Common myeloid progenitor, CD34-positive (primary cell): ENCODE measurements at regions of chr10 and their contacts with region 1.

Region 1: GRCh38 chr10:124741281-124741921 is 2.8 kb downstream of the FAM53B start:
- DNase-seq: peak; percentile 61 to 72 (median 71)
- H3K4me3 ChIP-seq: peak overlapping the region in 4 of 7 experiments; percentile 27 to 86 (median 58)
- H3K27ac ChIP-seq: no peak overlapping the region
- H3K4me1 ChIP-seq: peaks cover 17 to 74% (median 45%) of the 10 kb centered on the region in 4 experiments
- H3K27me3 ChIP-seq: no peaks in the 10 kb centered on the region

Region 2: DNA sequence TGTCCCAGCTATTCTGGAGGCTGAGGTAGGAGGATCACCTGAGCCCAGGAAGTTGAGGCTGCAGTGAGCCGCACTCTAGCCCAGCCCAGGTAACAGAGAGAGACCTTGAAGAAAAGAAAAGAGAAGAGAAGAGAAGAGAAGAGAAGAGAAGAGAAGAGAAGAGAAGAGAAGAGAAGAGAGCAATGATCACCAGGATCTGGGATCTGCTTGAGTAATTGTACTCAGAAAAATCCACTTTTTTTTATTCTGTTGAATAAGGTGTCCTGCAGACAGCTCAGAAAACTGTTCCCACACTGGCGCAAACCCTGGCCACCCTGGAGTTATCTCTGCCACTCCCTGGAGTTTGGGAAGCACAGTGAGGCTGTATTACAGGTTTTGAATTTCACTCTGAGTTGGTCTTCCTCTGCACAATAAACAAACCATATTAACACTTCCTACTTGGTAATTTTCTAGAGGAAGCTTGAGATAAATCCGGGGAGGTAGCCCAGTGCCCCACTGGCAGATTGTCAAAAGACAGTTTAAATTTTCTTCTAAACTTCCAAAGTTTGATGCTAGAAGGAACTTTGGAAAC is 313.1 kb before region 1 on chr10:
- CTCF ChIA-PET with region 1: no interaction called
- POLR2A ChIA-PET with region 1: no interaction called
- DNase-seq: no peak
- H3K4me3 ChIP-seq: no peak overlapping the region
- H3K27ac ChIP-seq: no peak overlapping the region
- H3K4me1 ChIP-seq: no peaks in the 10 kb centered on the region
- H3K27me3 ChIP-seq: peaks cover 0 to 15% (median 4%) of the 10 kb centered on the region in 5 experiments

Region 3: GRCh38 chr10:124530215-124530665 is 211.2 kb before region 1 on chr10:
- CTCF ChIA-PET with region 1: interaction called, 112 read pairs
- POLR2A ChIA-PET with region 1: interaction called, 6 read pairs
- DNase-seq: peak; percentile 80 to 87 (median 87)
- H3K4me3 ChIP-seq: no peak overlapping the region
- H3K27ac ChIP-seq: no peak overlapping the region
- H3K4me1 ChIP-seq: peaks cover 6 to 37% (median 20%) of the 10 kb centered on the region in 4 experiments
- H3K27me3 ChIP-seq: no peaks in the 10 kb centered on the region

Region 4: DNA sequence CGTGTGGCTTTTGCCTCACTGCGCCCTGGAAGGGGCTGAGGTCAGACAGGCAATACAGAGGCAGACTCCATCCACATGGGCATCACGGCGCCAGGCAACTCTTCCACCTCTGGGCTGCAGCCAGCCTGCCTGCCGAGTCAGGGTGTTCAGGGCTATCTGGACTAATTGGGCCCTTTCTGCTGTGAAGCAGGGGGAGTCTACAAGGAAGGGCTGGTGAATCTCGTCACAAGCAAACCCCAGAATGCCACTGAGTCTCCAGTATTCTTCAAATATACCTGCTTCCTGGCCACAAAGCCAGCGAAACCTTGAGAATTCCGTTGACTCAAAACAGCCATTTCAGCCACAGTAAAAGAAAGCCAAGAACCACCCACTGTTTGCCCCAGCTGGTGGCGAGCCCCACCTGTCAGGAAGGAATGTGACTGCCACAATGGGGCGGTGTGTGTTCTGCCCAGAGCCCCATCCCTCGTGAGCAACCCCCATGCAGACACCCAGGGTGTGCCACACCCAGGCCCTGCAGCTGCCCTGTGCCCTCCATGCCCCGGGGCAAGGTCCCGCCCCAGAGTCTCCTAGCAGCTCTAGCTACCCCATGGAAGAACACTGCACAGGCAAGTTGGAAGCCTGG is 114.5 kb before region 1 on chr10:
- CTCF ChIA-PET with region 1: interaction called, 35 read pairs
- POLR2A ChIA-PET with region 1: no interaction called
- DNase-seq: peak in 1 of 3 donors; percentile 36
- H3K4me3 ChIP-seq: no peak overlapping the region
- H3K27ac ChIP-seq: no peak overlapping the region
- H3K4me1 ChIP-seq: peaks cover 2 to 44% (median 35%) of the 10 kb centered on the region in 4 experiments
- H3K27me3 ChIP-seq: no peaks in the 10 kb centered on the region

Region 5: DNA sequence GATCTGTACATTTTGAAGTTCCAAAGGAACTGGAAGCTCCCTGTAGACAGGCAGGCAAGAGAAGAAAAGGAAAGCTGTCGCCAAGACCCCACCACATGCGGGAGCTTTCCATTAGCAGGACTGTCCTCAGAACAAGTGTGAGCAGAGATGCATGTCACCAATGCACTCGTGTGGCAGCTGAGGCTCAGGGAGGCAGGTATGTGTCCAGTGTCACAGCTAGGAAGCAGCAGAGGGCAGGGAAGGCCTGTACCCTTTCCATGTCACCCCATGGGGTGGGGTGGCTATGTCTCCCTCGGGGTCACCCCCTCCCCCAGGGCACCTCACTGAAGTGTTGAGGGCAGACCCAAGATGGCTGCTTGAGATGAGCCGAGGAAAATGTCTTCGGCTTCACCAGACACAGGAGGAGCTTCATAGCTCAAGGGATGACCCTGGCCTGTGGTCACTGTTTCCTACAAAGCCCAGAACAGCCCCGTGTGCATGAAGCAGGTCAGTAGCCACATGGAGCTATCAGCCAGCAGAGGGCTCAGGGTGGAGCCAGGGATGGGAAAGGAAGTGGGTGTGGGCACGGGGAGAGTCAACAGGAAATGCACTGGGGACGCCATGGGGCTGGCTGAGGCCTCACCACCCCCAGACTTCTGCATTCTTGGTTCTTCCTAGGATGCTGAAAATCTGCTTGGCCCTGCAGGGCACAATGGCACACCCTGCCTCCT is 93.8 kb before region 1 on chr10:
- CTCF ChIA-PET with region 1: interaction called, 54 read pairs
- POLR2A ChIA-PET with region 1: no interaction called
- DNase-seq: peak; percentile 86 to 92 (median 91)
- H3K4me3 ChIP-seq: peak overlapping the region in 5 of 7 experiments; percentile 16 to 60 (median 40)
- H3K27ac ChIP-seq: peak overlapping the region; percentile 46 to 72
- H3K4me1 ChIP-seq: peaks cover 16 to 87% (median 69%) of the 10 kb centered on the region in 4 experiments
- H3K27me3 ChIP-seq: no peaks in the 10 kb centered on the region

Region 6: DNA sequence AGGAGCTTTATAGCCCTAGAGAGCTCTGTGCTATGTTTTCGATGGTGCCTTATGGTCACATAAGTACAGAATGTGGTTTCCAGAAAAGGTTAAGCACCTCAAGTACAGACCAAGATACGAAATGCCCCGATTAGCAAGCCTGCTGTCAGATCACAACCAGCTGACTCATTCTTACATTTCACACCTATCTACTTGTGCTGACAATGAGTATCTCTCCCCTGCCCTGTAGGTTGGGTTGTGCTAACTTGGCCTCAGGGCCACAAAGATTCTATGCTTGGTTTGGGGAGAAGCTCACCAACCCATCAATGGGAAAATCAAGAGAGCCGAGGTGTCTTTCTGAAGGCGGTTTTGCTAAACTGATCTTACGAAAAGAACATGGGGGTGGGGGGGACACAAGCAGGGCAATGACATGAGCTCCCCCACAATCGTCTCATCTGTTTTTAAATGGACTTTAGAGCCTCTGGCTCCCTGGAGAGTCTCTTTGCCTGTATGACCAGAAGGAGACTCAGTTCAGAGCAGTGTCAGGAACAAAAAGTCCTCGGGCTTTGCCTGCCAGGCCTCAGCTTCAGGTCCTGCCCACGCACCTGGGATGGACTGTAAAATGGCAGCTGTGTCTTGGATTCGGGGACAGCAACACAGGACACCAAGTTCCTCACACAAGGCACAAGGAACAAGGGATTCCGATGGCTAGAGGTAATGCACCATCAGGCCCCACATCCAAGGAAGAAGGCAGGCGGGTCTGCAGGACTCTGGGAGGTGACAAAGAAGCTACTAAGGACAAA is 52.3 kb before region 1 on chr10:
- CTCF ChIA-PET with region 1: interaction called, 30 read pairs
- POLR2A ChIA-PET with region 1: no interaction called
- DNase-seq: peak in 1 of 3 donors; percentile 14
- H3K4me3 ChIP-seq: no peak overlapping the region
- H3K27ac ChIP-seq: no peak overlapping the region
- H3K4me1 ChIP-seq: peaks cover 16 to 70% (median 29%) of the 10 kb centered on the region in 4 experiments
- H3K27me3 ChIP-seq: no peaks in the 10 kb centered on the region

Region 7: GRCh38 chr10:124719213-124719851 is 22.1 kb before region 1 on chr10:
- CTCF ChIA-PET with region 1: interaction called, 78 read pairs
- POLR2A ChIA-PET with region 1: interaction called, 9 read pairs
- DNase-seq: peak; percentile 88 to 95 (median 95)
- H3K4me3 ChIP-seq: peak overlapping the region in 3 of 7 experiments; percentile 23 to 45 (median 41)
- H3K27ac ChIP-seq: peak overlapping the region in 1 of 2 experiments; percentile 49
- H3K4me1 ChIP-seq: peaks cover 42 to 86% (median 65%) of the 10 kb centered on the region in 4 experiments
- H3K27me3 ChIP-seq: no peaks in the 10 kb centered on the region

Region 8: GRCh38 chr10:124755581-124755980 is 14.2 kb after region 1 on chr10:
- CTCF ChIA-PET with region 1: interaction called, 28 read pairs
- POLR2A ChIA-PET with region 1: no interaction called
- DNase-seq: no peak
- H3K4me3 ChIP-seq: no peak overlapping the region
- H3K27ac ChIP-seq: no peak overlapping the region
- H3K4me1 ChIP-seq: no peaks in the 10 kb centered on the region
- H3K27me3 ChIP-seq: no peaks in the 10 kb centered on the region